ENCODE measurements at regions of chr1 and their contacts with region 1.

Region 1: GRCh38 chr1:92831762-92832536 is at the start of gene RPL5:
- DNase-seq: peak; percentile 98 to 99 (median 99)
- H3K4me3 ChIP-seq: peak within 1 kb of the TSS; percentile 61 to 100 (median 99)
- H3K27ac ChIP-seq: peak within 1 kb of the TSS; percentile 92 to 98
- H3K4me1 ChIP-seq: peaks cover 4 to 28% (median 17%) of the 10 kb centered on the region in 4 experiments
- H3K27me3 ChIP-seq: no peaks in the 10 kb centered on the region

Region 2: DNA sequence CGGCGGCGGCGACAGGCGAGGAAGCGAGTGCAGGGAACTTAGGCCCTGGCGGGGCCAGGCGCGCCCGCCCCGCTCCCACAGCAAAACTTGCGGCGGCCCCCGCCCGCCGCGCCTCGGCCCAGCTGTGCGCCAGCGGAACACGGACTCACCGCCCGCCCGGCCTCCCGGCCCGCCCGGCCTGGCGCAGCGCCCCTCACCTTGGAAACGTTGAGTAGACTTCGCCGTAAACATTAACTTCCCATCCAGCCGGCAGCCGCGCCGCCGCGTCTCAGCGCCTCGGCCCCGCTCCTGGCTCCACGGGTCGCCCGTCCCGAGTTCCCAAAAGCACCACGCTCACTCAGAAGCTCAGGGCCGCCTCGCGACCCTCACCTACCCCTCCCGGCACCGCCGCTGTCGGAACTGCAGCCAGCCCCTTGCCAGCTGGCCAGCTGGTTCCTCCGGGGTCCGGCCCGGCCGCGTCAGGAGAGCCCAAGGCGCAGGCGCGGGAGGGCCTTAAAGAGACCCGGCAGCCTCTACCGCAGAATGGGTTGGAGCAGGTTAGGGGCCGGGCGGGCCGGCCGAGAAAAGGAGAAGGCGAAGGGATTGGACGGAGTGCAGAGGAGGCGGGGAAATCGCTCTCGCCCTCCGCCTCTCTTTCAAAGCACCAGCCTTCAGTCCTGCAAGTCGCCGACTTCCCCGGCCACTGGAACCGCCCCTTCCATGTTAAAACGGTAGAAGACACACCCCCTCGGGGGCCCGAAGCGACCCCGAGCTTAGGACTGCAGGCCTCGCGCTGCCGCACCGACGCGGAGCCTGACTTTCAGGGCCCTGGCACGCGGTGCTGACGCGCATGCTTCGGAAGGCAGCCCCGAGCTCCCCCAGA is 47.1 kb before region 1 on chr1 and contains the start of gene EVI5:
- CTCF ChIA-PET with region 1: interaction called, 10 read pairs
- POLR2A ChIA-PET with region 1: interaction called, 6 read pairs
- DNase-seq: peak; percentile 94 to 98 (median 96)
- H3K4me3 ChIP-seq: peak within 1 kb of the TSS; percentile 45 to 79 (median 74)
- H3K27ac ChIP-seq: peak within 1 kb of the TSS; percentile 33 to 82
- H3K4me1 ChIP-seq: peaks cover 5 to 20% (median 18%) of the 10 kb centered on the region in 4 experiments
- H3K27me3 ChIP-seq: peaks cover 2 to 36% (median 6%) of the 10 kb centered on the region in 5 experiments

Measured in common myeloid progenitor, CD34-positive (primary cell).